ENCODE measurements at regions of chr22 and their contacts with region 1.

Region 1: GRCh38 chr22:24758164-24758799 is 16.2 kb downstream of the PIWIL3 start:
- DNase-seq: peak in 4 of 5 donors; percentile 41 to 50 (median 42)
- ATAC-seq: no peak
- H3K4me3 ChIP-seq: no peak overlapping the region
- H3K27ac ChIP-seq: no peak overlapping the region
- H3K4me1 ChIP-seq: no peaks in the 10 kb centered on the region
- H3K27me3 ChIP-seq: peaks cover 0 to 15% (median 0%) of the 10 kb centered on the region in 9 donors
- CTCF ChIP-seq: peak; percentile 79 to 97 (median 90)
- POLR2A ChIP-seq: no peak

Region 2: DNA sequence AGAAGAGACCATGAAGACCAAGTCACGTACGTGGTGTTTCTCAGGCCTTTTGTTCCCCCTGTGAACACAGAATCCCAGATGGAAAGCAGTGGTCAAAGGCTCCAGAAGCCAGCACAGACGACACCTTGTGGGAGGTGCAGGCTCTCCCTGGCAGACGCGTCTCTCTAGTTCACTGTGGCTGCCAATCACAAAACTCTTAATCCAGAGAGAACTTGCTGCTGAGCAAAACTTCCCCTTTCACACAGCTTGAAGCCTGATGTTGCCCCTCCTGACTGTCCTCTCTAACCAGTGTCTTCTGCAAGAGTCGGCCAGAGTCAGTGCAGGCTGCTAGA is 50.8 kb before region 1 on chr22:
- intact Hi-C with region 1: loop called in 1 of 10 experiments (anchors 5 kb)
- DNase-seq: no peak
- ATAC-seq: peak in 3 of 4 donors; percentile 25 to 46 (median 30)
- H3K4me3 ChIP-seq: no peak overlapping the region
- H3K27ac ChIP-seq: no peak overlapping the region
- H3K4me1 ChIP-seq: peaks cover 0 to 7% (median 0%) of the 10 kb centered on the region in 12 donors
- H3K27me3 ChIP-seq: peaks cover 0 to 6% (median 0%) of the 10 kb centered on the region in 9 donors
- CTCF ChIP-seq: peak in 4 of 12 donors; percentile 7 to 26 (median 15)
- POLR2A ChIP-seq: no peak